Pancreas (tissue), 10 donors: ENCODE measurements at regions of chr11 and their contacts with region 1.

Region 1: DNA sequence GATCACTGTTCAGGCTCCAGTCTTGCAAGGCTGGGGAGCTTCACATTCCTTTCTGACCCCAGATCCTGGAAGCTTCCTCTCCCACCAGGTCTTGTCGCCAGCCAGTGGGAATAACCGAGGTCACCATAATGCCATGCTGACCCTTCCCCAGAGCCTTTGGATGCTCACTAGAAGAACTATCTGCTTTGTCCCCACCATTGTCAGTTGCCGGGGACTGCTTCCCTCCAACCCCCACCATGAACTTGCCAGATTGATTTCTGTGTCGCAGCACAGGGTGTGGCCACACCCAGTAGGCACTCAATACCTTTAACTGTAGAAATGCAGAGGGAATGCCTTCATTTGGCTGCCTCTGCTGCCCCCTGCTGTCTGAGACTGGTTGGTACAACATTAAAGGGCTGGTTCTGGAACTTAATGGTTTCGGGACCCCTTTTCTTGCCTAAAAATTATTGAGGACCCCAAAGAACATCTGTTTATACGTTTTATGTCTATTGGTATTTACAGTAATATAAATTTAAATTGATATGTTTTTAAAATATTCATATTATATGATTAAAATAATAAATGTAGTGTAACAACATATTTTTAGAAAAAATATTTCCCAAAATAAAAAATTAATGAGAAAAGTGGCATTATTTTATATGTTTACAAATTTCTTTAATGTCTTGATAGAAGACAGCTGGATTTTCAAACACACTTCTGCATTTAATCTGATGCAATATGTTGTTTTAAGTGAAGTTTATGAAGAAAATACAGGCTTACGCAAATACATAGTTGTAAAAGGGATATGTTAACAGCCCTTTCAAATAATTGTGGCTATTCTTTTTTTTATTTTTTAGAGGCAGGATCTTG is 6.7 kb upstream of the GDPD5 start:
- DNase-seq: peak in 5 of 6 donors; percentile 27 to 83 (median 64)
- ATAC-seq: peak; percentile 35 to 96 (median 84)
- H3K4me3 ChIP-seq: no peak overlapping the region
- H3K27ac ChIP-seq: no peak overlapping the region
- H3K4me1 ChIP-seq: no peaks in the 10 kb centered on the region
- H3K27me3 ChIP-seq: no peaks in the 10 kb centered on the region
- CTCF ChIP-seq: peak; percentile 66 to 85 (median 80)

Region 2: DNA sequence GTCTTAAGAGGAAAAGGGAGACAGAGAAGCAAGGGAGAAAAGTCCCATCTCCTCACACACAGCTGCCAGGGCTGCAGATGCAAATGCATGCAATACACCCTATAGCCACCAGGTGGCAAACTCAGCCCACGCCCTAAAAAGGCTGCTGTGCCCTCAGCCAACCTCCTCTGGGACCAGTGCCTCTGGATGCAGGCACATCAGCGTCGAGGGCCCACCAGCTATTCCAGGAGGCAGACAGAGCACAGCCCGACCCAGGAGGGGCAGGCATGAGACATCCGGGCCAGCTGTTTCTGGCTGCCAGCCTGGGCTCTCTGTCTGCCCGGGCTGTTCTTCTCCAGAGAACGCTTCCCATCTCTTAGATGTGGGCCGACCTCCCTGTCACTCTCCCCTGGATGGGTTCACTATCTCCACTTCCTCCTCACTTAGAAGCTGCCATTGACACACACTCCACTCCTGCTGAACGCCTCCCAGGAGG is 252.2 kb before region 1 on chr11:
- intact Hi-C with region 1: loop called in 1 of 3 experiments (anchors 10 kb)
- DNase-seq: peak; percentile 56 to 86 (median 78)
- ATAC-seq: peak; percentile 80 to 95 (median 90)
- H3K4me3 ChIP-seq: no peak overlapping the region
- H3K27ac ChIP-seq: no peak overlapping the region
- H3K4me1 ChIP-seq: no peaks in the 10 kb centered on the region
- H3K27me3 ChIP-seq: no peaks in the 10 kb centered on the region
- CTCF ChIP-seq: peak; percentile 92 to 95 (median 94)

Region 3: DNA sequence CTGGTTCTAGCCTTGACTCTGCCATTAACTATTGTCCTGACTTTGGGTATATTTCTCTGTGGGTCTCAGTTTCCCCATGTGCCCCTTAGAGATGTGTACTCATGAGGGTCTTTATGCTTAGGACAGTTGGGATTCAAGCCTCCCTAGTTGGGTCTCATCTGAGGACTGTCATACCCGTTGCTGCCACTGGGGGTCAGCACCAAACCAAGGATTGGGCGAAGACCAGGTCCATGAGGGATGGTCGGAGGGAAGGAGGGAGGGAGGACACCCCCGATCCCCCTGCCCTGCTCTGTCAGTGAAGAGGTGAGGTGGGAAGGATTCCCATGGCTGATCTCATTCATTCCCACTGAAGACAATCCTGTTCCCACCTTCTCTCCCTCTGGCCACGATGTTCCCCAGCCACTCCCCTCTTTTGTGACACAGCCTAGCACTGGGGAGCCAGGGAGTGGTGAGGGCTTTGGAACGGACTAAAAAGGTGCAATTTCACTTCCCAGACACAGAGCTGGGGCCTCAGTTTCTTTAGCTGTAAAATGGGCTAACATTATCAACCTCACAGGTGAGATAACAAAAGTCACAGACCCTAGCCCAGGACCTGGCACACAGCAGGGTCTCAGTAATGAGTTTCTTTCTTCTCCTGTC is 87.0 kb before region 1 on chr11:
- intact Hi-C with region 1: loop called (anchors 2 to 10 kb)
- DNase-seq: peak; percentile 43 to 91 (median 70)
- ATAC-seq: peak; percentile 75 to 91 (median 88)
- H3K4me3 ChIP-seq: no peak overlapping the region
- H3K27ac ChIP-seq: no peak overlapping the region
- H3K4me1 ChIP-seq: no peaks in the 10 kb centered on the region
- H3K27me3 ChIP-seq: no peaks in the 10 kb centered on the region
- CTCF ChIP-seq: peak; percentile 84 to 91 (median 88)